ENCODE measurements at regions of chr16 and their contacts with region 1.

Region 1: GRCh38 chr16:23491490-23492391 is 18.6 kb downstream of the GGA2 start:
- DNase-seq: no peak
- ATAC-seq: no peak
- H3K4me3 ChIP-seq: no peak overlapping the region
- H3K27ac ChIP-seq: no peak overlapping the region
- H3K4me1 ChIP-seq: no peaks in the 10 kb centered on the region
- H3K27me3 ChIP-seq: no peaks in the 10 kb centered on the region
- CTCF ChIP-seq: no peak
- EP300 ChIP-seq: no peak
- POLR2A ChIP-seq: no peak
- RAD21 ChIP-seq: no peak

Region 2: DNA sequence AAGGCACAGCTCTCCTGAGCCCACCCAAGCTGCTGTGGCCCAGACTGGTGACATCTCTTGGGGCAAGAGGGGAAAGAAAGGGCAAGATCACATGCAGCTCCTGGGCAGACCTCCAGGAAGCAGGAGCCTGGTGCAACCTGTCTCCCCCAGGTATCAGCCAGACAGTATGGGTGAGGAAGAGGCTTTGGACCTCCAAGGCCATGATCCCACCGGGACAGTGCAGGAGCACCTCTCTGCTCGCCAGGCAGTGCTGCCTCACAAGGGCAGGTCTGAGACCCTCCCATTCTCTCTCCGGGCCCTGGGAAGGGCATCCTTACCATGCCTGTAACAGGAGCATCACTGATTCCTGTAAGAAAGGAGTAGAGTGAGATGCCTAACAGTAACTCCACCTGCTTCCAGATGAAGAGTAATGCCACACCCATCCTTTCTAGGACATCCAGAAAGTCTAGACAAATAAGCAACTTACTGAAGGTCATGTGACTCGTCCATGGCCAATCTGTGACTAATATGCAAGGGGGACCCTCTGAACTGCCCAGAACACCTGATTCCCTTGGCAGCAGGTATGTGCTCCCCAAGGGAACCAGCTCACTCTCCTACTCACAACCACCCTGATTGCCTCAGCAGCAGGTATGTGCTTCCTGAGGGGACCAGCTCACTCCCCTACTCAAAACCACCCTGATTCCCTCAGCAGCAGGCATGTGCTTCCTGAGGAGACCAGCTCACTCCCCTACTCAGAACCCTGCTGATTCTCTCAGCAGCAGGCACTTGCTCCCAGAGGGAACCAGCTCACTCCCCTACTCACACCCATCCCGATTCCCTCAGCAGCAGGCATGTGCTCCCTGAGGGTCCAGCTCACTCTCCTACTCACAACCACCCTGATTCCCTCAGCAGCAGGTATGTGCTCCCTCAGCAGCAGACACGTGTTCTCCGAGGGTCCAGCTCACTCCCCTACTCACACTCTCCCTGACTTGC is 12.9 kb before region 1 on chr16:
- CTCF ChIA-PET with region 1: no interaction called
- POLR2A ChIA-PET with region 1: interaction called, 18 read pairs
- in situ Hi-C with region 1: no loop called
- intact Hi-C with region 1: no loop called
- DNase-seq: no peak
- ATAC-seq: no peak
- H3K4me3 ChIP-seq: no peak overlapping the region
- H3K27ac ChIP-seq: no peak overlapping the region
- H3K4me1 ChIP-seq: no peaks in the 10 kb centered on the region
- H3K27me3 ChIP-seq: no peaks in the 10 kb centered on the region
- CTCF ChIP-seq: no peak
- EP300 ChIP-seq: no peak
- POLR2A ChIP-seq: no peak
- RAD21 ChIP-seq: no peak

Measured in K562 (cell line).